ENCODE measurements at regions of chr2 and their contacts with region 1.

Region 1: DNA sequence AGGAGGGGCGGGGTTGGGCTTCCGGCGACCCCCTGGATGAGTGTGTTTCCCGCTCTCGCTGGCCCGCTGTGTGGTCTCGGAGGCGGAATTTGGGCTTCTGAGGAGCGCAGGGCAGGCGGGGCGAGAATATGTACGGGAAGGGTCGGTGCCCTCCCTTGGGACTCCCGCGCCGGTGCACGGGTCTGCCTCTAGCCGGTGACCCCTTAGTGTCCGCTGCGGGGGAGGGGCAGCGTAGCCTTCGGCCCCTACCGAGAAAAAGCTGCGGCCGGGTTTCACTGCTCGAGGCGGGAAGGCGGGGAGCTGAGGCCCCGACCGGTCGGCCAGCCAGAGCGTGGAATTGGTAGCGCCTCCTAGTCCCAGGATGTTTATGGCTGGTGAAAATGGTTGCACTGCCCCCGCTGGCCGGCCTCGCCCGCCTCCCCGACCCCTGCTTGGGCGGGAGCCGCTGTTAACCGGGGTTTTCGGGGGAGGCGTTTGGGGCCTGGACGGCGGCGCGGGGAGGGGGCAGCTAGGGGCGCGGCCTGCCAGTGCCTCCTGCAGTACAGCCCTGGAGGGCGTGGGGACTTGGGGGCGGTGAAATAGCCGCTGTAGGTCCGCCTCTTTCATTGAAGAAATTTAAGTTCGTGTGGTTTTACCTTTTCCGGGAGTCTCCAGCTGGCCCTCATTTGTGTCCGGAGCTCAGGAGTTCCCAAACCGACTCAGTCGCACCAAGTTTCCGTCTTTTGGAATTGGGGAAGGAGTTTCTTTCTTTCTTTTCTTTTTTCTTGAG is at the start of gene UGP2:
- DNase-seq: peak; percentile 88
- H3K4me3 Mint-ChIP-seq: peak within 1 kb of the TSS; percentile 92
- H3K27ac Mint-ChIP-seq: peak within 1 kb of the TSS; percentile 95
- H3K4me1 Mint-ChIP-seq: peaks cover 48% of the 10 kb centered on the region
- H3K27me3 Mint-ChIP-seq: peaks cover 2% of the 10 kb centered on the region
- total RNA-seq, gene UGP2: 90.8 and 91.2 TPM in 2 replicates

Region 2: GRCh38 chr2:63856303-63856603 is 14.8 kb after region 1 on chr2:
- intact Hi-C with region 1: loop called (anchors 1 kb)
- DNase-seq: peak; percentile 39
- H3K4me3 Mint-ChIP-seq: peak overlapping the region; percentile 62
- H3K27ac Mint-ChIP-seq: peak overlapping the region; percentile 94
- H3K4me1 Mint-ChIP-seq: peaks cover 65% of the 10 kb centered on the region
- H3K27me3 Mint-ChIP-seq: no peaks in the 10 kb centered on the region

Measured in activated T-helper 2 cell treated with anti-CD3 and anti-CD28 coated beads, Interferon-gamma antibody, Interleukin-2, Interleukin-4, amounts not matched to agents 10 μg/mL and 5 μg/mL and 100 μg/mL, durations not matched to agents 14 hours and 24 hours and 36 hours (primary cell).